Endothelial cell of umbilical vein (primary cell): ENCODE measurements at regions of chr6 and their contacts with region 1.

Region 1: GRCh38 chr6:77457720-77458349 is 5.5 kb downstream of the HTR1B start:
- DNase-seq: peak; percentile 93
- H3K4me3 ChIP-seq: peak overlapping the region in 1 of 3 experiments; percentile 14
- H3K27ac ChIP-seq: peak overlapping the region; percentile 85
- H3K4me1 ChIP-seq: peaks cover 46% of the 10 kb centered on the region
- H3K27me3 ChIP-seq: no peaks in the 10 kb centered on the region
- CTCF ChIP-seq: peak; percentile 71 to 81
- POLR2A ChIP-seq: no peak

Region 2: DNA sequence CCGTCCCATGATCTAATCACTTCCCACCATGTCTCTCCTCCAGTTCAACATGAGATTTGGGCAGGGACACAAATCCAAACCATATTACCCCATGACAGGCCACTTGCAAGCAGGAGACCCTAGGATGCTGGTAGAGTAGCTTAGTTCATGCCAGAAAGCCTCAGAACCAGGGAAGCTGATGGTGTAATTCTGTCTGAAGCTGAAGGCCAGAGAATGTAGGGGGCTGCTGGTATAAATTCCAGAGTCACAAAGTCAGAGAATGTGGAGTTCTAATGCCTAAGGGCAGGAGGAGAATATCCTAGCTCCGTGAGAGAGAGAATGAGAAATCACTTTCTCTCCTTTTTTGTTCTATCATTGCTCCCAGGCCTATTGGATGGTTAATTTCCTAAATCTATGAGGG is 1295.0 kb before region 1 on chr6:
- CTCF ChIA-PET with region 1: no interaction called
- POLR2A ChIA-PET with region 1: no interaction called
- dilution Hi-C with region 1: no loop called
- intact Hi-C with region 1: loop called (anchors 5 kb)
- DNase-seq: no peak
- H3K4me3 ChIP-seq: no peak overlapping the region
- H3K27ac ChIP-seq: no peak overlapping the region
- H3K4me1 ChIP-seq: no peaks in the 10 kb centered on the region
- H3K27me3 ChIP-seq: no peaks in the 10 kb centered on the region
- CTCF ChIP-seq: no peak
- POLR2A ChIP-seq: no peak

Region 3: DNA sequence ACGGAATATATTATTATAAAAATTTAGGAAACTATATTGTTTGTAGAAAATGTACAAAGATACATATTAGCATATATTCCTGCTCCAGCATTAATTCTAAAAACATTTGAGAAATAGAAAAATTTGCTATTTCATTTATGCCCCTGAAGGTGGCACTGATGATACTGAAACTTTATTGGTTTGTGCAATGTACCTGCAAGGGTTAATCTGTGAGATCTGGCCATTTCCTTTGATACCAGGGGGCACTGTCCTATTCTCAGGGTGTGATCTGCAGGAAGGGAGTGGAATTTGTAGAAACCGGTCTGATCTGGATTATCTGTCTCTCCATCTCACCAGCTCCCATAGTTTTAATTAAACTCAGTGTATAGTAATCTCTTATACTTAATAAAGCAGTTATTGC is 760.2 kb before region 1 on chr6:
- CTCF ChIA-PET with region 1: interaction called, 13 read pairs
- POLR2A ChIA-PET with region 1: no interaction called
- dilution Hi-C with region 1: no loop called
- intact Hi-C with region 1: loop called (anchors 1 kb)
- DNase-seq: peak; percentile 64
- H3K4me3 ChIP-seq: no peak overlapping the region
- H3K27ac ChIP-seq: no peak overlapping the region
- H3K4me1 ChIP-seq: peaks cover 9% of the 10 kb centered on the region
- H3K27me3 ChIP-seq: no peaks in the 10 kb centered on the region
- CTCF ChIP-seq: peak; percentile 18 to 30
- POLR2A ChIP-seq: no peak

Region 4: DNA sequence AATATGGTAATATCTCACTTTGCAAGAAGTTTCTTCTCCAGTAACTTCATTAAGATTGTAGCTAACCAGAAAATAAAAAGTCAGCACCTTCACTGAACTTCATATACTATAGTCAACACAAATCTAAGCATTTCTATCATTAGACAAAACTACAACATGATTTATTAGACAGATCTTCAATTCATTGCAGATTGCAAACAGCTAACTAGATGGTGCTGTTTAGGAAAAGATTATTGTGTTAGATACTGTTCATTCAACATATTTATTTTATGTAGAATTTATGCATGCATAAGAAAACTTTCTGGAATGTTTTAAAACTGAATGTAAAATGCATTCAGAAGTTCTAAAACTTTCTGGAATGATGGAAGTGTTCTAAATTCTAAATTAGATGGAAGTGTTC is 436.6 kb before region 1 on chr6:
- CTCF ChIA-PET with region 1: no interaction called
- POLR2A ChIA-PET with region 1: no interaction called
- dilution Hi-C with region 1: no loop called
- intact Hi-C with region 1: loop called (anchors 5 kb)
- DNase-seq: no peak
- H3K4me3 ChIP-seq: no peak overlapping the region
- H3K27ac ChIP-seq: no peak overlapping the region
- H3K4me1 ChIP-seq: no peaks in the 10 kb centered on the region
- H3K27me3 ChIP-seq: no peaks in the 10 kb centered on the region
- CTCF ChIP-seq: no peak
- POLR2A ChIP-seq: no peak

Region 5: DNA sequence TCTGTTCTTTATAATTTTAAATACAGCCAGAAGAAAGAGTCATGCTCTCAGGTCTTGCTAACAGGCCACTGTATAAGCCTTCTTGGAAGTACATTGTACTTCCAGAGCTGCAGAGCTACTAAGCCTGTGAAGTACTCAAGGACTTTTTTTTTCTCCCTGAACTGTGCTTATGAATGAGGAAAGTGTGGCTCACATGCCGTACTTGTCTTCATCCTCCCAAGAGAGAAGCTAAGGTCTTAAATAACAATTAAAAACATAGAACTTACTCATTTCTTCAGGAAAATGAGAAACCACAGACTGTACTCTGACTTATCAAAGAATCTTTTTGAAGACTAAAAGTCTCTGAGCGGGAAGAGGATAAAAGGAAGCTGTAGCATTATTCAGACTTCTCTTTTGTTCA is 212.8 kb before region 1 on chr6:
- CTCF ChIA-PET with region 1: no interaction called
- POLR2A ChIA-PET with region 1: no interaction called
- dilution Hi-C with region 1: no loop called
- intact Hi-C with region 1: loop called (anchors 2 kb)
- DNase-seq: no peak
- H3K4me3 ChIP-seq: no peak overlapping the region
- H3K27ac ChIP-seq: no peak overlapping the region
- H3K4me1 ChIP-seq: peaks cover 7% of the 10 kb centered on the region
- H3K27me3 ChIP-seq: no peaks in the 10 kb centered on the region
- CTCF ChIP-seq: no peak
- POLR2A ChIP-seq: no peak

Region 6: GRCh38 chr6:77447254-77447653 is 10.6 kb before region 1 on chr6:
- CTCF ChIA-PET with region 1: interaction called, 5 read pairs
- POLR2A ChIA-PET with region 1: interaction called, 3 read pairs
- dilution Hi-C with region 1: no loop called
- intact Hi-C with region 1: loop called (anchors 1 kb)
- DNase-seq: peak; percentile 78
- H3K4me3 ChIP-seq: no peak overlapping the region
- H3K27ac ChIP-seq: peak overlapping the region; percentile 30
- H3K4me1 ChIP-seq: peaks cover 15% of the 10 kb centered on the region
- H3K27me3 ChIP-seq: no peaks in the 10 kb centered on the region
- CTCF ChIP-seq: no peak
- POLR2A ChIP-seq: no peak